ENCODE measurements at regions of chr2 and their contacts with region 1.

Region 1: DNA sequence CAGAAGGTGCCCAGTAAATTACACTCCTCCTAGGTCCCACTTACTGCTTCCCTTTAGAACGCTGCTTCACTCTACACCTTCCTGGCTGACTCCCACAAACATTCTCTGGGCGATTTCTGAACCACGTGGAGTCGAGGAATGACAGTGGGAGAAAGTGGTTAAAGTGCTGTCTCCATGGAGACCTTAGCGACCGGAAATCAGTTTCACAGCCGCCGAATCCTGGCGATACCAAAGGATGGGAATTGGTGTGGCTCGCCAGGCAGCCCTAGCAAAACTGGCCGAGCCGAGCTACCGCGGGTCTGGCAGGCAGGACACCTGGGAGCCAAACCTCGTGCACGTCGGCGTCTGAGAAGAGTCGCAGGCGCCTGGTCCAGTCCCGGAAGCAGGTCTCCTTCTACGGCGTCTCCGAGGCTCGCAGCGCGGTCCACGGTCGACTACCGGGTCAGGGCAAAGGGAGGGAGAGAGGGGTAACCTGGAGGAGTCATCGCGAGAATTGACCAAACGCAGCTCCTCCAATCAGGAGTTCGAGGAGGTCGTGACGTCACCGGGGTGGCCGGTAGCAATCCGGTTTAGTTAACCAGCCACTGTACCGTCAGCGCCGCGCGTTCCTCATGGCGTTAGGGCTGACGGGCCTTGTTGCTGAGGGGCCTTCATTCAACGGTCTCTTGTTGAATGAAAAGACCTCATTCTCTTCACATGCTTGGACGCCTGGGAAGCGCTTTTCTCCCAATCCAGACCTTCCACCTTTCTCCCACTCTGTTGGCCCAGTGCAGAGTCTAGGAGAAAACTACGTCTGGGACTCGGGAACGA is at the start of gene THADA:
- DNase-seq: peak; percentile 99
- H3K4me3 Mint-ChIP-seq: peak within 1 kb of the TSS; percentile 95
- H3K27ac Mint-ChIP-seq: peak within 1 kb of the TSS; percentile 94
- H3K4me1 Mint-ChIP-seq: peaks cover 33% of the 10 kb centered on the region
- H3K27me3 Mint-ChIP-seq: no peaks in the 10 kb centered on the region
- total RNA-seq, gene THADA: 21.6 to 25.8 TPM

Region 2: GRCh38 chr2:42810121-42810970 is 785.5 kb before region 1 on chr2:
- CTCF ChIA-PET with region 1: interaction called, 6 read pairs
- POLR2A ChIA-PET with region 1: interaction called, 13 read pairs
- DNase-seq: peak; percentile 96
- H3K4me3 Mint-ChIP-seq: peak overlapping the region; percentile 93
- H3K27ac Mint-ChIP-seq: peak overlapping the region; percentile 100
- H3K4me1 Mint-ChIP-seq: peaks cover 18% of the 10 kb centered on the region
- H3K27me3 Mint-ChIP-seq: peaks cover 7% of the 10 kb centered on the region

Region 3: DNA sequence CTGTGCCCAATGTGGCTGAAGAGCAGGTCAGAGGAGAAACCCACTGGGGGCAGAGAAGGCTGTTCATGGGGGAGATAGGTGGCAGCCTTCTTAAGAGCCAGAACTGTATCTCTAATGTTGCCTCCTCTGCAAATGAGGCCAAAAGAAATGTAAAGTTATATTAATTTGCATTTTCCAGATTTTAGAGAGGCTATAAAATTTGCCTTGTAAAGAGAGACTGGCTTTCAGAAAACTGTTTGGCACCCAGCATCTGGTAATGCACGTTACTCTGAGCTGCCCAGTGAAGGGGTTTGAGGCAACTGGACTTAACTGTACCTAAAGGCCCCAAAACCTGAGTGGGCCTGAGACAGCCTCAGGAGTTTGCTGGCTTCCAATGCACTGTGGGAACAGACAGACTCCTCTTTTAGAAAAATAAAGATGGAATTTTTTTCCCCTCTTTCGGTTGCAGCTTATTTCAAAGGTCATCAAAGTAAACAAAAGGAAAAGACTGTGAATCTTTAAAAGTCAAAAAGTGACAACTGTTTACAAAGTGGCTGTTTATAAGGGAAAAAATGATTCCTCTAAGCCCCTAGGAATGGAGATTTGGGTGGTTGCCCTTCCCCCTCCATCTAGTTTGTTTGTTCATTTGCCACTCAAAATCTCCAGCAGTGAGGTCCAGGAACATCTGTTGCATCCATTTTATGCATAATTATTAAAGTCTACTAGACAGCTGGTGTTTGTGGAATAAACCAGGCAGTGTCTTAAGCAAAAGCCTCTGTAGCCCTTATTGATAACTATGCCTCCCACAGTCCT is 237.2 kb before region 1 on chr2:
- CTCF ChIA-PET with region 1: no interaction called
- POLR2A ChIA-PET with region 1: no interaction called
- DNase-seq: no peak
- H3K4me3 Mint-ChIP-seq: no peak overlapping the region
- H3K27ac Mint-ChIP-seq: no peak overlapping the region
- H3K4me1 Mint-ChIP-seq: no peaks in the 10 kb centered on the region
- H3K27me3 Mint-ChIP-seq: no peaks in the 10 kb centered on the region

Region 4: DNA sequence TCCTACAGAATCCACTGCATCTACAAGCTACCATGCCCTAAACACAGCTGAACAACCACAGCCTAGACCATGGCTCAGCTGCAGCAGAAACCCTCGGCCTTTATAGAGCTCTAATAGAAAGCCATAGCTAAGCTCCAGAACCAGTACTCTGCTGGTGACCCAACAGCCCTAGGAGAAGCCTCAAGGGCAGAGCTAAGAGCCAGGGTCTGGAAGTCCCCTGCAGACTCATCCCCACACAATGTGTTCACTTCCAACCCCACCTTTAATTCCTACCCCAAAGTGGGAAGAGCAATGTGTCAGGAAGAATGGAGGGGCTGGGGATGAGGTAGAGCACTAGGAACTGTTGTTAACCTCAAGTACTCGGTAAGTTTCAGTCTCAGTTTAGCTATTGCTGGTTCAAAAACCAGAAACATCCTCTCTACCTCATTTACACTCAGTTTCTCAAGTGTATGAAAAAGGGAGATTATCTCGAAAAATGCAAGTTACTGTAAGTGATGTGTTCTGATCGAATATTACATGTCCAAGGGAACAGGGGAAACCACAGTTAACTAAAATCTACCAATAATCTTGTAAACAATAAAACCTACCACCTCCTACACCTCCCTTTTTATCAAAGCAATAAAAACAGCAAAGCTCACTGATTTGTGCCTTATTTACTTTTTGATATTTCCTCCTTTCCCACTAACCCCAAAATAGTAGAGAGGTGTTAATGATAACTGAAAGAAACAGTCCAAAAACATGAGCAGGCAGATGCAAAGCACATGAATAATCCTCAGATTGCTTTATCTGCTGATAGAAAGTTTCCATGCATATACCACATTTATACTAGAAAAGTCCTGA is 36.2 kb before region 1 on chr2:
- CTCF ChIA-PET with region 1: interaction called, 10 read pairs
- POLR2A ChIA-PET with region 1: interaction called, 17 read pairs
- DNase-seq: no peak
- H3K4me3 Mint-ChIP-seq: peak overlapping the region; percentile 11
- H3K27ac Mint-ChIP-seq: peak overlapping the region; percentile 83
- H3K4me1 Mint-ChIP-seq: peaks cover 64% of the 10 kb centered on the region
- H3K27me3 Mint-ChIP-seq: no peaks in the 10 kb centered on the region

Region 5: DNA sequence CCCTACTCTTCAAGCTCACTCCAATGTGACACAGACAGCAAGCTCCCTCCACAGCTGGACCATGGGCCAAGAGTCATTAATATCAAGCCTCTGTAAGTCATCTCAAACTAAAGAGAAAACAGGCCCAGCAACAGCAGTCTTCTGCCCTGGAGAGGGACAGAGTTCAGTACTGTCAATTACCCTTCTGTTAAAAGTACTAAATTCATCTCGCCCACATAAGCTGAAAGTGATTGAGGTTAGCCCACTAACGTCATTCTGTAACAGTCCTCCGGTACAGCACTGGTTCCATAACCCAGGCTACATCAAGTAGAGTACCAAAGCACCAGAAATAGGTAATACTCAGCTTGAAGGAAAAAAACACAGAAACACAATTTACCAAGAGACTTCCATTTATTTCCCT is 25.9 kb before region 1 on chr2:
- CTCF ChIA-PET with region 1: interaction called, 8 read pairs
- POLR2A ChIA-PET with region 1: interaction called, 17 read pairs
- DNase-seq: peak; percentile 40
- H3K4me3 Mint-ChIP-seq: no peak overlapping the region
- H3K27ac Mint-ChIP-seq: peak overlapping the region; percentile 72
- H3K4me1 Mint-ChIP-seq: peaks cover 54% of the 10 kb centered on the region
- H3K27me3 Mint-ChIP-seq: no peaks in the 10 kb centered on the region

Region 6: DNA sequence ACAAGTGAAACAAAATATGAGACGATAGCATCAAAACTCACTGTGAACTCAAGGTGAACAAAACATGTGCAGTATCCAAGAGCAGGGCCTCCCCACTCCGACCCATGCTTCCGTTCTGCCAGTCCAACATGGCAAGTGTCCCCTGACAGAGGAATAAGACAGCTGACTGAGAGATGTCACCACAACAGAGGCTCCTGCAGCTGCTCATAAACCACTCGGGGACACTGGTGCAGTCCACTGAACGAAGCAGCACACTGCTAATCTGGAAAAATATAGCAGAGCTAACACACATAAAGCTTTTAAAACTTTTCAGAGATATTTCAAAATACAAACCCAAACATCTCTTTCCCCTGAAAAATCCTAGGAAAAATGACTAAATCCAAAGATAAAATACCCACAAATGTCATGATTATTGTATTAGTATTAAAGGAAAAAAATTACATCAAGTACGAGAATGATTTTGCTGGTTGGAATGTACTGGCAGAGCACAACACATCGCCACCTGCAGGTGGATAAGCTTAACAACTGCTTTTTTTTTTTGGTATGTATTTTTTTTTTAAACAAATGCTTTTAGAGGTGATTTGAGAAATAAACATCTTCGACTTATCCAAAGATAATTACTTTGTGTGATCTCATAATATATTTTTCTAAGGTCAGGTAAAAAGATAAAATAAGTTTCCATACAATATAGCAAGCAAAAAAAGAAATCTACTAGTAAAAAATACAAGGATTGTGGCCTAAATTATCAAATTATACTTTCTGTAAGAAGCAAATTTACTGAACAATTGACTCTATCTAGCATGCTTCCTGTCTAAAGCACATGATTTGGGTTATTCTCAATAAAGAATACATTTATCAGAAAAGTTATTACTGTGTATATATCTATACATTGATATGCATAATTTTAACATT is 18.6 kb before region 1 on chr2:
- CTCF ChIA-PET with region 1: interaction called, 22 read pairs
- POLR2A ChIA-PET with region 1: interaction called, 8 read pairs
- DNase-seq: peak; percentile 30
- H3K4me3 Mint-ChIP-seq: no peak overlapping the region
- H3K27ac Mint-ChIP-seq: no peak overlapping the region
- H3K4me1 Mint-ChIP-seq: peaks cover 21% of the 10 kb centered on the region
- H3K27me3 Mint-ChIP-seq: no peaks in the 10 kb centered on the region

Region 7: DNA sequence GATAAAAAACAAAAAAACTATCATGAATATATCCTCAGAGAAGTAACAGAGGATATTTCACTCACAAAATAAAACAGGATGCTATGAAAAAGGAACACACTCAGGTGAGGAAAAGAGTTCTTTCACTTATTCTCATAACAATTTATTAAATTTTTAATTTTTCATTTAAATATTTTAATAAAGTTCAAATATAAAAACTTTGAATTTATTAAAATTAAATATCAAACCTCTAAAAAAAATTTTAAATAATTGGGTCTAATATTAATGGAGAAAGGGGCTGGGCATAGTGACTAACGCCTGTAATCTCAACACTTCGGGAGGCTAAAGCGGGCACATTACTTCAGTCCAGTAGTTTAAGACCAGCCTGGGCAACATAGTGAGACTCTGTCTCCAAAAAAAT is 10.1 kb before region 1 on chr2:
- CTCF ChIA-PET with region 1: interaction called, 3 read pairs
- POLR2A ChIA-PET with region 1: interaction called, 12 read pairs
- DNase-seq: no peak
- H3K4me3 Mint-ChIP-seq: no peak overlapping the region
- H3K27ac Mint-ChIP-seq: no peak overlapping the region
- H3K4me1 Mint-ChIP-seq: peaks cover 3% of the 10 kb centered on the region
- H3K27me3 Mint-ChIP-seq: no peaks in the 10 kb centered on the region

Region 8: GRCh38 chr2:43611987-43612894 is 16.4 kb after region 1 on chr2:
- CTCF ChIA-PET with region 1: interaction called, 36 read pairs
- POLR2A ChIA-PET with region 1: interaction called, 4 read pairs
- DNase-seq: peak; percentile 72
- H3K4me3 Mint-ChIP-seq: no peak overlapping the region
- H3K27ac Mint-ChIP-seq: no peak overlapping the region
- H3K4me1 Mint-ChIP-seq: peaks cover 2% of the 10 kb centered on the region
- H3K27me3 Mint-ChIP-seq: peaks cover 5% of the 10 kb centered on the region

Region 9: DNA sequence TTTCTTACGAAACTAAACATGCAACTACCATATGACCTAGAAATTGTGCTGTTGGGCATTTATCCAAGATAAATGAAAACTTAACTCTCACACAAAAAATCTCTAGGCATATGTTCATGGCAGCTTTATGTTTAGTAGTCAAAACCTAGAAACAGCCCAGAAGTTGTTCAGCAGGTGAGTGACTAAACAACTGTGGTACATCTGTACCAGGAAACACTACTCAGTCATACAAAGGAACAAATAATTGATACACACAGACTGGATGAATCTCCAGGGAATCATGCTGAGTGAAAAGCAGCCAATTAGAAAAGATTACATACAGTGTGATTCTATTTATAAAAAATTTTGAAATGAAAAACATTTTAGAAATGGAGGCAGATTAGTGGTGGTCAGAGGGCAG is 207.3 kb after region 1 on chr2:
- CTCF ChIA-PET with region 1: no interaction called
- POLR2A ChIA-PET with region 1: no interaction called
- DNase-seq: no peak
- H3K4me3 Mint-ChIP-seq: no peak overlapping the region
- H3K27ac Mint-ChIP-seq: no peak overlapping the region
- H3K4me1 Mint-ChIP-seq: no peaks in the 10 kb centered on the region
- H3K27me3 Mint-ChIP-seq: no peaks in the 10 kb centered on the region